ENCODE measurements at regions of chr20 and their contacts with region 1.

Region 1: GRCh38 chr20:20237093-20237959 is 130.6 kb upstream of the INSM1 start:
- DNase-seq: no peak
- H3K4me3 ChIP-seq: no peak overlapping the region
- H3K27ac ChIP-seq: no peak overlapping the region
- H3K4me1 ChIP-seq: peaks cover 5% of the 10 kb centered on the region
- H3K27me3 ChIP-seq: no peaks in the 10 kb centered on the region
- CTCF ChIP-seq: peak; percentile 79

Region 2: GRCh38 chr20:20083807-20084206 is 153.5 kb before region 1 on chr20:
- intact Hi-C with region 1: loop called (anchors 5 kb)
- DNase-seq: no peak
- H3K4me3 ChIP-seq: no peak overlapping the region
- H3K27ac ChIP-seq: peak overlapping the region; percentile 93
- H3K4me1 ChIP-seq: peaks cover 9% of the 10 kb centered on the region
- H3K27me3 ChIP-seq: peaks cover 7% of the 10 kb centered on the region
- CTCF ChIP-seq: peak; percentile 59